ENCODE measurements at regions of chr1 and their contacts with region 1.

Region 1: GRCh38 chr1:117398957-117399356 is 31.7 kb downstream of the MAN1A2 start:
- DNase-seq: no peak
- H3K4me3 ChIP-seq: no peak overlapping the region
- H3K4me3 Mint-ChIP-seq: peak overlapping the region in 2 of 8 donors; percentile 0 to 23
- H3K27ac ChIP-seq: no peak overlapping the region
- H3K27ac Mint-ChIP-seq: no peak overlapping the region
- H3K4me1 ChIP-seq: peaks cover 26% of the 10 kb centered on the region
- H3K4me1 Mint-ChIP-seq: peaks cover 41 to 73% (median 59%) of the 10 kb centered on the region in 4 donors
- H3K27me3 ChIP-seq: no peaks in the 10 kb centered on the region
- H3K27me3 Mint-ChIP-seq: no peaks in the 10 kb centered on the region

Region 2: DNA sequence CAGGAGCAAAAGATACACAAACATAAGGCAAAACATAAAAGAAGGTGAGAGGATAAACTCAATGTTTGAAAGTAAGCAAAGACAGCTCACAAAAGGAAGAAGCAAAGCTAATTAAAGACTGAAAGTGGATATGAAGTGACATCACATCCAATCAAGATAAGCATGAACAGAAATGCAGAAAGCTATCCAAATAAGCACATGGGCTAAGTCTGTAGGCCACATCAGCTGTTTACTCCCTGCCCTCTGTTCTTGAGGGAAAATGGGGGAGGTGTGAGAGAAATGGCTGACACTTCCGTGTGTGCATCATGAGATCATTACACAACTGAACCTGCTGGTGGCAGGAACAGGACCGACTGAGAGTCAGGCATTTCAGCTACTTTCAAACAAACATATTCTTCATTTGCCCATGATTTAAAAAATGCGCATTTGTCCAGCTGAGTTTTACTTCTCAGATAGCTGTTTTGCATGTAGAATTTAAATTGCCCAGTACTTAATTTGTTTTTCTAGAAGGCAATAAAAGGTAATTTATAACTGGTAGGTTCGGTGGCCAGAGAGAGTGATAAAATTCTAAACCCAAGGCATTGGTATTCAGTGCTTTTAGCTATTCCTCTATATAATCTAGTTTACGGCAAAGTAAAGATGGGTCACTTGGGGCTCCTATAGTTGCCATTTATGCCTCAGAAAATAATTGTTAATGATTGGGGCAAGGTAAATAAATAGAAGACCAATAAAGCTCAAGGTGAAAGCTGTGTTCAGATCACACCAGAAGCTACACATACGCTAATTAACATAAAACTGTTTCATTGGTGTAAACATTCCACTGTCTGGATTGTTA is 58.9 kb before region 1 on chr1:
- CTCF ChIA-PET with region 1: no interaction called
- POLR2A ChIA-PET with region 1: no interaction called
- intact Hi-C with region 1: no loop called
- DNase-seq: peak; percentile 28 to 47 (median 42)
- H3K4me3 ChIP-seq: no peak overlapping the region
- H3K4me3 Mint-ChIP-seq: no peak overlapping the region
- H3K27ac ChIP-seq: no peak overlapping the region
- H3K27ac Mint-ChIP-seq: peak overlapping the region in 4 of 7 donors; percentile 3 to 24 (median 8)
- H3K4me1 ChIP-seq: peaks cover 16% of the 10 kb centered on the region
- H3K4me1 Mint-ChIP-seq: peaks cover 9 to 23% (median 15%) of the 10 kb centered on the region in 4 donors
- H3K27me3 ChIP-seq: no peaks in the 10 kb centered on the region
- H3K27me3 Mint-ChIP-seq: peaks cover 0 to under 1% of the 10 kb centered on the region in 2 donors

Region 3: DNA sequence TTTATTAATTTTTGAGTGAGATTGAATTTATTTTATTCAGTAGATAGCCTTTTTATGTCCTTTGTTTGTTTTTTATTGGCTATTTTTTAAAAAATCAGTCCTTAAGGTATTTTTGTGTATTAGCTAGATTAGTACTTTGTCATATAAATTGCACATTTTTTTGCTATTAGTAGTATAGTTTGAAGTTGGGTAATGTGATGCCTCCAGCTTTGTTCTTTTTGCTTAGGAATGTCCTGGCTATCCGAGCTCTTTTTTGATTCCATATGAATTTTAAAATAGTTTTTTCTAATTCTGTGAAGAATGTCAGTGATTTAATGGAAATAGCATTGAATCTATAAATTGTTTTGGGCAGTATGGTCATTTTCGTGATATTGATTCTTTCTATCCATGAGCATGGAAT is 48.7 kb after region 1 on chr1:
- CTCF ChIA-PET with region 1: no interaction called
- POLR2A ChIA-PET with region 1: no interaction called
- intact Hi-C with region 1: loop called (anchors 5 kb)
- DNase-seq: no peak
- H3K4me3 ChIP-seq: no peak overlapping the region
- H3K4me3 Mint-ChIP-seq: no peak overlapping the region
- H3K27ac ChIP-seq: no peak overlapping the region
- H3K27ac Mint-ChIP-seq: peak overlapping the region in 1 of 7 donors; percentile 46
- H3K4me1 ChIP-seq: no peaks in the 10 kb centered on the region
- H3K4me1 Mint-ChIP-seq: peaks cover 0 to 2% (median 0%) of the 10 kb centered on the region in 4 donors
- H3K27me3 ChIP-seq: no peaks in the 10 kb centered on the region
- H3K27me3 Mint-ChIP-seq: no peaks in the 10 kb centered on the region